GM10248 (cell line): ENCODE measurements at regions of chr19 and their contacts with region 1.

Region 1: GRCh38 chr19:39341719-39342604 is at the start of gene SAMD4B:
- DNase-seq: peak; percentile 99
- CTCF ChIP-seq: peak; percentile 77

Region 2: DNA sequence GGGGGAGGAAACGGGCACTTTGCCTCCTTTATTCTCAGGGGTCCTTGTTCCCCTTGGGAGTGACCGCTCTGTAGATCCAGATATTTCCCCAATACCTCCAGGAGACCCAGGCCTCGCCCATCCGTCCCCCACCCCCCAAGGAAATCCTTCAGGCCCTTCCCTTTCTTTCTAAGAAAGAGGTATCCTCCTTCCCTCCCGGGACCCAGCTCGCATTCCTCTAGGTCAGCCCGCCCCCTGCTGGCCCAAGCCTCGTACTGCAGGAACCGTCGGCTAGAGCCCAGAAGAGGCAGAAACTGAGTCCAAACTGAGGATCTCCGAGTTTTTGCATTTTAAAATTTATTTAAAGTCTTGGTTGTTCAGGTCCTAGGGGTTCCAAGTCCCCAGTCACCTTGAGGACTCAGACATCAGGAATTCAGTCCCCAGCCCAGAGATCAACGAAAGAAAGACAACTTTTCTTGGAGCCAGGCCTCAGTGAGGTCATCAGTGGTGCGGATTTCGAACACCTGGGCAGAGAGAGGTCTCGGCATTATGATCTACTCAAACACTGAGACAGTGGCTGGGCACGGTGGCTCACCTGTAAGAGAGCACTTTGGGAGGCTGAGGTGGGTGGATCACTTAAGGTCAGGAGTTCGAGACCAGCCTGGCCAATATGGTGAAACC is 13.8 kb before region 1 on chr19:
- CTCF ChIA-PET with region 1: interaction called, 16 read pairs
- POLR2A ChIA-PET with region 1: no interaction called
- DNase-seq: peak; percentile 81
- CTCF ChIP-seq: peak; percentile 96

Region 3: GRCh38 chr19:39352381-39353255 is 10.7 kb after region 1 on chr19:
- CTCF ChIA-PET with region 1: interaction called, 15 read pairs
- POLR2A ChIA-PET with region 1: no interaction called
- DNase-seq: no peak
- CTCF ChIP-seq: no peak